Astrocyte of the cerebellum (primary cell): ENCODE measurements at regions of chr10 and their contacts with region 1.

Region 1: DNA sequence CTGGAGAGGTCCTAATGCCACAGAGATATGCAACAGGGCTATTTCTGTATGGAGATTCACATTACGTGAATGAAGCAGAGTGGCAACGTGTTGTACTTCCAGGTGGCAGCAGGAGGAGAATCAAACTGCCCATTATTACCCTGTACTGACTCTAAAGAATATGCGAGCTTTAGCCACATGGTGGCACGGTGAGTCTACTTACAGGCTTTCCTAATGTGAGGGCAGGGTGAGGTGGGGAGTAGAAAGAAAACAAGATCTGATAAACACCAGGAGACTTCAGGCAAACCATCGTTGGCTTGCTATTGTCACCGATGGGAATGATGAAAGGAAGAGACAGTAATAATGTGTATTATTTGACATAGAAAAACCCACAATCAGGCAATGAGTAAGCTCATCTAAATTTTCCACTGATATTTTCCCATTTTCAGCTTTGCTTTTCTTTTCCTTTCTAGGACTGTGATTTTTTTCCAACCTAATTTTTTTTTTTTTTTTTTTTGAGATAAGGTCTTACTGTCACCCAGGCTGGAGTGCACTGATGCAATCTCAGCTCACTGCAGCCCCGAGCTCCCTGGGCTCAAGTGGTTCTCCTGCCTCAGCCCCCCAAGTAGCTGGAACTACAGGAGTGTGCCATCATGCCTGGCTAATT is 164.3 kb downstream of the BTAF1 start:
- DNase-seq: peak; percentile 73
- H3K4me3 ChIP-seq: no peak overlapping the region
- CTCF ChIP-seq: peak; percentile 87

Region 2: GRCh38 chr10:92024700-92025099 is 63.2 kb before region 1 on chr10:
- in situ Hi-C with region 1: no loop called
- DNase-seq: no peak
- H3K4me3 ChIP-seq: no peak overlapping the region
- CTCF ChIP-seq: no peak

Region 3: DNA sequence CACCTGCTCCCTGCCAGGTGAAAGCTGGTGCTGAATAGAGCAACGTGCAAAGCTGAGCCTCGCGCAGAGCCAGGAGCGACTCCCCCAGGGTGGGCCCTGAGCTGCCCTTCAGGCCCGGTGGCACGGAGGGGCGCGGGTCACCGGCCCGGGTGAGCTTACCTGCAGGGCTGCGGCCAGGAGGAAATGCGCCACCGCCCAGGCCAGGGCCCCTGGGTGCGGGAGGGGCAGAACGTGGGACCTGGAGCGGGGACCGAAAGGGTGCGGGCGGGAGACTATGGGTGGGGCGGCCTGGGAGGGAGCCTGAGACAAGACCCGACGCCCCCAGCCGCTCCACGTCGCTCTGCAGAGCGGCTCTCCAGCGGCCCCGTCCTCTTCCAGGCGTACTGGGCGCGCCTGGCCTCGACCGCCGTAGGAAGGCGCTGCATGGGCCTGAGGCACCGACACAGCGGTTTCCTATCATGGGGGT is 42.2 kb before region 1 on chr10:
- in situ Hi-C with region 1: no loop called
- DNase-seq: no peak
- H3K4me3 ChIP-seq: no peak overlapping the region
- CTCF ChIP-seq: no peak

Region 4: GRCh38 chr10:92124616-92125143 is 36.8 kb after region 1 on chr10:
- in situ Hi-C with region 1: loop called (anchors 5 kb)
- DNase-seq: peak; percentile 83
- H3K4me3 ChIP-seq: no peak overlapping the region
- CTCF ChIP-seq: no peak

Region 5: DNA sequence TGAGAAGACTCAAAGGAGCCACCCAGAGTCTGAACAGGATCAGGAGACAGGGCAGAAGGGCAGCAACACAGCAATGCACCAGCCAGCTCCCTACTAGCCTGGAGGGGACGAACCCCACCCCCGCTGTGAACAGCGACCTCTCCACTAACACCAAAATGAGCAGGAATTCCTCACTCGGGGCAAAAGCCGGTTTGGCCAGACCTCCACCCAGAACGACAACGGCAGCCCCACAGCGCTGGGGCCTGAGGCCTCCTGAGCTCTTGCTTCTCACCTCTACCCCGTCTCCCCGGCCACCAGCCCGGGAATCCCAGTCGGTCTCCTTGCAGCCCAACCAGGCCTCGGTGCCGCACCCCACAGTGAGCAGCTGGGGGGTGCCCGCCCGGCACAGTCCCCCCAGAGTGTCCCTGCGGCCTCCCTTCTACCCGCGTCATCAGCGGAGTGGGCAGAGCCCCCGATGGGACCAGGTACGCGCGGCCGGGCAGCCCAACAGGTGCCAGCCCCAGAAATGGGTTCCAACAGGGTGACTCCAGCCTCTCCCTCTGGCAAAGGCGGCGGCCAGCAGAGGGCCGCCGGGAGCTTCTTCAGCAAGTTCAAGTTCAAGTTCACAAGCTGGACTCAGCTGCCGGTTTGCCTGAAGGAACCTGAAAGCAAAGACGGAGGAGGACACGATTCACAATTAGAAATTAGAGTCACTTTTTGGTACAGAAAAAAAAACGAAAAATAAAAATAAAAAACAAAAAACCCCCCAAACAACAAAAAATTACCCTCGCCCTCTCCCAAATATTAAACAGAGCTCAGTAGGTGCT is 332.1 kb after region 1 on chr10:
- in situ Hi-C with region 1: loop called (anchors 25 kb)
- DNase-seq: no peak
- H3K4me3 ChIP-seq: peak overlapping the region; percentile 30
- CTCF ChIP-seq: peak; percentile 55